ENCODE measurements at regions of chr16 and their contacts with region 1.

Region 1: GRCh38 chr16:1705688-1706385 is at the start of gene MAPK8IP3:
- DNase-seq: peak; percentile 97 to 100
- ATAC-seq: peak; percentile 81 to 95 (median 86)
- H3K4me3 ChIP-seq: peak within 1 kb of the TSS; percentile 83
- H3K4me3 Mint-ChIP-seq: peak within 1 kb of the TSS; percentile 100
- H3K27ac ChIP-seq: peak within 1 kb of the TSS; percentile 73
- H3K27ac Mint-ChIP-seq: peak within 1 kb of the TSS; percentile 98 to 99
- H3K4me1 ChIP-seq: peaks cover 39% of the 10 kb centered on the region
- H3K4me1 Mint-ChIP-seq: peaks cover 22 to 33% of the 10 kb centered on the region in 2 donors
- H3K27me3 ChIP-seq: no peaks in the 10 kb centered on the region
- H3K27me3 Mint-ChIP-seq: peaks cover 0 to 3% of the 10 kb centered on the region in 2 donors
- CTCF ChIP-seq: peak; percentile 93
- total RNA-seq, gene MAPK8IP3: 272 to 291 (median 285) TPM

Region 2: GRCh38 chr16:1351582-1352362 is 354.1 kb before region 1 on chr16 and contains the starts of genes GNPTG and TSR3:
- intact Hi-C with region 1: loop called (anchors 10 kb)
- DNase-seq: peak; percentile 89 to 95
- ATAC-seq: peak; percentile 91 to 96 (median 95)
- H3K4me3 ChIP-seq: peak within 1 kb of the TSS; percentile 74
- H3K4me3 Mint-ChIP-seq: peak within 1 kb of the TSS; percentile 86
- H3K27ac ChIP-seq: peak within 1 kb of the TSS; percentile 55
- H3K27ac Mint-ChIP-seq: peak within 1 kb of the TSS; percentile 80
- H3K4me1 ChIP-seq: peaks cover 25% of the 10 kb centered on the region
- H3K4me1 Mint-ChIP-seq: peaks cover 27 to 56% of the 10 kb centered on the region in 2 donors
- H3K27me3 ChIP-seq: no peaks in the 10 kb centered on the region
- H3K27me3 Mint-ChIP-seq: no peaks in the 10 kb centered on the region
- CTCF ChIP-seq: no peak
- total RNA-seq, gene GNPTG: 58.7 to 65.9 (median 62.0) TPM
- total RNA-seq, gene TSR3: 29.4 to 34.7 (median 29.7) TPM

Region 3: DNA sequence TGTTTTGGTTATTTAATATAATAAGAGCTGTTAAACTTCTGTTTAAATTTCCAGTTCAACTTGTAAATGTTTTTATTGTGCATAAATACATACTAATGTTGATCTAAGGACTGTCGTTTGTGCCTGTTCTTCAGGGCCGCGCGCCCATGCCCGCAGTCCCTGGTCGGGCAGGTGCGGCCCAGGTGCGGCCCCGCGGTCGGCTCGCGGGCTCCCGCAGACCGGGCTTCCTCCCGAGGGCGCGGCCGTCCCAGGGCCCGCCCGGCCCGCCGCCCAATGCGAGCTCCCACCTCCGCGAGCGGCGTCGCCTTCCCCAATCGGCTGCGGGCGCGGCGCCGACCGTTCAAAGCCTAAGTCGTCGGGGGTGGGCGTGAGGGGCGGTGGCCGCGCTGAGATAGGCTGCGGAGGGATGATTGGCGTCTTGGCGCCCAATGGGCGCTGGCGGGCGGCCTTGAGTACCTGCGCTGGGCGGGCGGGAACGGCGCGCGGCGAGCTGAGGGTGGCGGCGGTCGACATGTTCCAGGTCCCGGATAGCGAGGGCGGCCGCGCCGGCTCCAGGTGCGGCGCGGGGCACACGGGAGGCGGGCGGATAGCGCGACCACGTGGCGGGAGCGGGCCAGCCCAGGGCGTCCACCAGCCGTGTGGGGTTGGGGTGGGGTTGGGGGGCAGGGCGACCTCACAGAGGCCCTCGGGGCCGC is 27.9 kb before region 1 on chr16 and contains the start of gene JPT2:
- intact Hi-C with region 1: loop called (anchors 2 kb)
- DNase-seq: peak; percentile 89 to 97
- ATAC-seq: peak; percentile 97
- H3K4me3 ChIP-seq: peak within 1 kb of the TSS; percentile 51
- H3K4me3 Mint-ChIP-seq: peak within 1 kb of the TSS; percentile 86
- H3K27ac ChIP-seq: no peak within 1 kb of the TSS
- H3K27ac Mint-ChIP-seq: peak within 1 kb of the TSS; percentile 73 to 80
- H3K4me1 ChIP-seq: peaks cover 14% of the 10 kb centered on the region
- H3K4me1 Mint-ChIP-seq: peaks cover 26% of the 10 kb centered on the region in 2 donors
- H3K27me3 ChIP-seq: no peaks in the 10 kb centered on the region
- H3K27me3 Mint-ChIP-seq: no peaks in the 10 kb centered on the region
- CTCF ChIP-seq: no peak
- total RNA-seq, gene JPT2: 12.2 to 28.4 (median 14.2) TPM

Region 4: GRCh38 chr16:1723450-1724147 is 17.8 kb after region 1 on chr16:
- intact Hi-C with region 1: no loop called
- DNase-seq: peak in 1 of 2 donors; percentile 73
- ATAC-seq: peak; percentile 46 to 60 (median 51)
- H3K4me3 ChIP-seq: no peak overlapping the region
- H3K4me3 Mint-ChIP-seq: peak overlapping the region; percentile 80
- H3K27ac ChIP-seq: peak overlapping the region; percentile 43
- H3K27ac Mint-ChIP-seq: peak overlapping the region; percentile 70 to 85
- H3K4me1 ChIP-seq: peaks cover 56% of the 10 kb centered on the region
- H3K4me1 Mint-ChIP-seq: peaks cover 38 to 41% of the 10 kb centered on the region in 2 donors
- H3K27me3 ChIP-seq: no peaks in the 10 kb centered on the region
- H3K27me3 Mint-ChIP-seq: no peaks in the 10 kb centered on the region
- CTCF ChIP-seq: peak; percentile 81

Measured in natural killer cell (primary cell).